CD4-positive, alpha-beta memory T cell (primary cell): ENCODE measurements at regions of chr10 and their contacts with region 1.

Region 1: DNA sequence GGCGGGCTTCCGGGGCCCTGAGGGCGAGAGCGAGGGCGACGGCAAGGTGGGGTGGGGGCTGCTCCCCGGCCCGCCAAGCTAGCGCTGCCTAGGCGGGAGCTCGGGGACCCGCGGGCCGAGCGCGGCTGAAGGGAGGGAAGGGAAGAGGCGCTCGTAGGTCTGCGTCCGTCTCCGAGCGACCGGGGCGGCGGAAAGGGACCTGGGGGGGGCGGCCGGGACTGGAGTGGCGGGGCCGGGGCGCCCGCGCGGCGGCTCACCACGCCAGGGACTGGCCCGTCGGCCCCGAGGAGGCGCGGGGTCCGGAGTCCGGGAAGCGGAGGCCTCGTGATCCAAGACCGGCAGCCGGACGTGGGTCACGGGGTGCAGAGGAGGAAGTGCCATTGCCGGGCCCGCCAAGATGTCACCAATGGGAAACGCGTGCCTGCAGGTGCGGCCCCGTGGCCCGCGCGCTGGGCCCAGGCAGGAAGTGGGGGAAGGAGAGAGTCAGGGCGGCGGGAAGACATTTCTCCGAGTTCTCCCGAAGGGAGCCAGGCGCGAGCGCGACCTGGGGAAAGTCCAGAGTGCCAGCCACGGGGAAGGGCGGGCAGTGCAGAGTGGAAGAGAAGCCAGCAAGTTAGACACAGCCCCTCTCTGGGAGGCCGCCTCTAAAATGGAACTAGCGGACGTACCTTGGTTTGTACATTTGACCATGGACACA is 11.9 kb downstream of the HNRNPF start:
- DNase-seq: peak; percentile 67 to 82 (median 75)
- H3K4me3 ChIP-seq: peak overlapping the region; percentile 10 to 67
- H3K4me3 Mint-ChIP-seq: peak overlapping the region; percentile 79 to 100 (median 96)
- H3K27ac ChIP-seq: peak overlapping the region; percentile 100
- H3K27ac Mint-ChIP-seq: peak overlapping the region; percentile 93 to 99 (median 98)
- H3K4me1 ChIP-seq: peaks cover 81% of the 10 kb centered on the region
- H3K4me1 Mint-ChIP-seq: peaks cover 62 to 95% (median 73%) of the 10 kb centered on the region in 4 donors
- H3K27me3 ChIP-seq: no peaks in the 10 kb centered on the region
- H3K27me3 Mint-ChIP-seq: no peaks in the 10 kb centered on the region

Region 2: DNA sequence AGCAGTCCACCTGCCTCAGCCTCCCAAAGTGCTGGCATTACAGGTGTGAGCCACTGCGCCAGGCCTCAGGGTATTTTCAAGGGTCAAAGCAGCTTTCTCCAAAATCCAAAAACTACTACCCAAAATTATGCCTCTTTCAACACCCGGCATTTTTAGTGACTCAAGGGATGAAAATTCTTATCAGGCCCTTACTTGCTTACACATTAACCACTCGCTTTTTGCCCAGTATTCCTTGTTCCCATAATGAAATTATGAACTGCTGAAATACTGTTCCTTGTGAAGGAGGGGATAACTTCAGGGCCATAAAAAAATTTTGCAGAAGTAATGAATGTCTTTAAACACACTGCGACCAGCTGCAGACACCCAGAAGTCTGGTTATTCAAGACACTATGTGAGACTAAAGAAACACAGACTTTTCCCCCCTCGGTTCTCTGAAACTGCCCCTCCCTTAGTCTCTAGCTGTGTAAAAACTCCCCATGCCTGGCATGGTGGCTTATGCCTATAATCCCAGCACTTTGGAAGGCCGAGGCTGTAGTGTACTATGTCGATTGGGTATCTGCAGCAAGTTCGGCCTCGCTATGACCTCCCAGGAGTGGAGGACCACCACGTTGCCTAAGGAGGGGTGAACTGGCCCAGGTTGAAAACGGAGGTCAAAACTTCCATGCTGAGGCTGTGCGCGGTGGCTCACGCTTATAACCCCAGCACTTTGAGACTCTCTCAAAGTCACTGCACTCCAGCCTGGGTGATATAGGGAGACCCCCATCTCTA is 13.7 kb before region 1 on chr10:
- CTCF ChIA-PET with region 1: interaction called, 7 read pairs
- POLR2A ChIA-PET with region 1: interaction called, 24 read pairs
- intact Hi-C with region 1: loop called (anchors 1 kb)
- DNase-seq: no peak
- H3K4me3 ChIP-seq: no peak overlapping the region
- H3K4me3 Mint-ChIP-seq: no peak overlapping the region
- H3K27ac ChIP-seq: no peak overlapping the region
- H3K27ac Mint-ChIP-seq: peak overlapping the region in 5 of 7 donors; percentile 56 to 88 (median 73)
- H3K4me1 ChIP-seq: peaks cover 9% of the 10 kb centered on the region
- H3K4me1 Mint-ChIP-seq: peaks cover 18 to 43% (median 26%) of the 10 kb centered on the region in 4 donors
- H3K27me3 ChIP-seq: no peaks in the 10 kb centered on the region
- H3K27me3 Mint-ChIP-seq: no peaks in the 10 kb centered on the region

Region 3: GRCh38 chr10:43407576-43408330 is 10.7 kb after region 1 on chr10:
- CTCF ChIA-PET with region 1: interaction called, 6 read pairs
- POLR2A ChIA-PET with region 1: interaction called, 250 read pairs
- intact Hi-C with region 1: loop called (anchors 1 kb)
- DNase-seq: peak; percentile 81 to 89 (median 84)
- H3K4me3 ChIP-seq: peak overlapping the region; percentile 83 to 85
- H3K4me3 Mint-ChIP-seq: peak overlapping the region; percentile 94 to 100 (median 98)
- H3K27ac ChIP-seq: peak overlapping the region; percentile 100
- H3K27ac Mint-ChIP-seq: peak overlapping the region; percentile 93 to 100 (median 99)
- H3K4me1 ChIP-seq: peaks cover 39% of the 10 kb centered on the region
- H3K4me1 Mint-ChIP-seq: peaks cover 18 to 53% (median 27%) of the 10 kb centered on the region in 4 donors
- H3K27me3 ChIP-seq: no peaks in the 10 kb centered on the region
- H3K27me3 Mint-ChIP-seq: no peaks in the 10 kb centered on the region

Region 4: DNA sequence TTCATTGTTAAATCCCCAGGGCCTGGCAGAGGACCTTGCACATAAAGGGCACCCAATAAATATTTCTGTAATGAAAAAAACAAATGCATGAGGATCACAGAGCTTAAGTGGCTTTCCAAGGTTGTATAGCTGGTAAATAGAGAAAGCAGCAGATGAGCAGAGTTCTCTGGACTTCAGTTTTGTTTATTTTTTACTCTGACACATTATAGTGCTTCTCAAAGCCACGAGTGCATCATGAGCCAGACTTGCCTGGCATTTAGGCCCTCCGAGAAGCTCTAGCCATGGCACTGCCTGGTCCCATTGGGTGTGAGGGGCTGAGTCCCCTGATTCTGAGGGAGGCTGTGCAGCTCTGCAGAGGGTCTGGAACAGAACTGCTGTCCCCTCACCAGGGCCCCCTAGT is 338.8 kb after region 1 on chr10:
- CTCF ChIA-PET with region 1: no interaction called
- POLR2A ChIA-PET with region 1: no interaction called
- intact Hi-C with region 1: no loop called
- DNase-seq: no peak
- H3K4me3 ChIP-seq: no peak overlapping the region
- H3K4me3 Mint-ChIP-seq: no peak overlapping the region
- H3K27ac ChIP-seq: no peak overlapping the region
- H3K27ac Mint-ChIP-seq: no peak overlapping the region
- H3K4me1 ChIP-seq: no peaks in the 10 kb centered on the region
- H3K4me1 Mint-ChIP-seq: no peaks in the 10 kb centered on the region
- H3K27me3 ChIP-seq: no peaks in the 10 kb centered on the region
- H3K27me3 Mint-ChIP-seq: peaks cover 0 to 2% of the 10 kb centered on the region in 2 donors